ENCODE measurements at regions of chr17 and their contacts with region 1.

Region 1: GRCh38 chr17:3827124-3827773 is 18.8 kb downstream of the NCBP3 start:
- DNase-seq: peak; percentile 54 to 78 (median 63)
- H3K4me3 ChIP-seq: no peak overlapping the region
- H3K4me3 Mint-ChIP-seq: no peak overlapping the region
- H3K27ac ChIP-seq: no peak overlapping the region
- H3K27ac Mint-ChIP-seq: peak overlapping the region in 1 of 7 donors; percentile 54
- H3K4me1 ChIP-seq: no peaks in the 10 kb centered on the region
- H3K4me1 Mint-ChIP-seq: no peaks in the 10 kb centered on the region
- H3K27me3 ChIP-seq: no peaks in the 10 kb centered on the region
- H3K27me3 Mint-ChIP-seq: peaks cover 0 to 2% (median 0%) of the 10 kb centered on the region in 3 donors
- CTCF ChIP-seq: peak; percentile 90

Region 2: DNA sequence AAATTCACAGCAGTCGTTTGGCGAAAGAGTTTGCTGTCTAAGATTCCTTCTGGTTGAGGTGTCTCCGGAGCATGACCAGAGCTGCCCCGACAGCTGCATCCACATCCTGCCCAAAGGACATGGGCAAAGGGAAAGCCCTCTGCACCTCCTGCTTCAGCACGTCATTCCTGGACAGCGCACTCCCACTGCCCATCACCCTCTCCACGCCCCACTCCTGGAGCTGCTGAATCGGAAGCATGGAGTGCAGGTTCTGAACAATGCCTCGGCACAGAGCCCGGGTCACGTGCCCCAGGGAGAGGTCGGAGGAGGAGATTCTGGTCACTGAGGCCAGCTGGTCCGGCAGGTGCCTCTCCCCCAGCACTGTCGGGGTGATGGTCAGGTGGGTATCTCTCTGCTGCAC is 216.7 kb before region 1 on chr17:
- intact Hi-C with region 1: no loop called
- DNase-seq: no peak
- H3K4me3 ChIP-seq: no peak overlapping the region
- H3K4me3 Mint-ChIP-seq: no peak overlapping the region
- H3K27ac ChIP-seq: no peak overlapping the region
- H3K27ac Mint-ChIP-seq: no peak overlapping the region
- H3K4me1 ChIP-seq: no peaks in the 10 kb centered on the region
- H3K4me1 Mint-ChIP-seq: no peaks in the 10 kb centered on the region
- H3K27me3 ChIP-seq: no peaks in the 10 kb centered on the region
- H3K27me3 Mint-ChIP-seq: peaks cover 0 to 1% (median 0%) of the 10 kb centered on the region in 3 donors
- CTCF ChIP-seq: no peak

Region 3: GRCh38 chr17:3659541-3660111 is 167.6 kb before region 1 on chr17:
- intact Hi-C with region 1: no loop called
- DNase-seq: no peak
- H3K4me3 ChIP-seq: no peak overlapping the region
- H3K4me3 Mint-ChIP-seq: no peak overlapping the region
- H3K27ac ChIP-seq: no peak overlapping the region
- H3K27ac Mint-ChIP-seq: peak overlapping the region in 1 of 7 donors; percentile 63
- H3K4me1 ChIP-seq: no peaks in the 10 kb centered on the region
- H3K4me1 Mint-ChIP-seq: peaks cover 3% of the 10 kb centered on the region
- H3K27me3 ChIP-seq: no peaks in the 10 kb centered on the region
- H3K27me3 Mint-ChIP-seq: peaks cover 0 to 2% (median 0%) of the 10 kb centered on the region in 3 donors
- CTCF ChIP-seq: no peak

Region 4: DNA sequence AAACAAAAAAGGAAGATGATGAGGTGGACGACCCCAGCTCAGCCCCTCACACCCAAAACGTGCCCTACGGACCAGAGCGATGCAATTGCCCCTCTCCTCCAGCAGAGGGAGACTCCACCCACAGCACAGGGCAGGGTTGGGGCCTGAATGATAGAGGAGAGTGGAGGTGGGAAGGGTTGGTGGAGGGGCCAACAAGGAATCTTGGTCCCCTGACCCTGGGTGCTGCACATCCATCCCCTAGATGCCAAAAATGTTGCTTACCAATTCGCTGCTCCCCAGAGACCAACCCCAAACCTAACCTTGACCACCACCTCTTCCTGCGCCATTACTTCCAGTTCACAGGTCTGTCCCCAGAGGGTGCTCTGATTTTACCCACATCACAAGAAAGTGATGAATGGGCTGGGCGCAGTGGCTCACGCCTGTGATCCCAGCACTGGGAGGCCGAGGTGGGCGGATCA is 144.2 kb before region 1 on chr17:
- intact Hi-C with region 1: loop called (anchors 2 to 5 kb)
- DNase-seq: peak; percentile 29 to 54 (median 48)
- H3K4me3 ChIP-seq: no peak overlapping the region
- H3K4me3 Mint-ChIP-seq: no peak overlapping the region
- H3K27ac ChIP-seq: no peak overlapping the region
- H3K27ac Mint-ChIP-seq: peak overlapping the region in 1 of 7 donors; percentile 74
- H3K4me1 ChIP-seq: peaks cover 18 to 32% of the 10 kb centered on the region in 2 donors
- H3K4me1 Mint-ChIP-seq: peaks cover 28% of the 10 kb centered on the region
- H3K27me3 ChIP-seq: no peaks in the 10 kb centered on the region
- H3K27me3 Mint-ChIP-seq: peaks cover 6 to 15% (median 9%) of the 10 kb centered on the region in 3 donors
- CTCF ChIP-seq: peak; percentile 98

Region 5: GRCh38 chr17:3738562-3739295 is 88.5 kb before region 1 on chr17:
- intact Hi-C with region 1: loop called (anchors 1 kb)
- DNase-seq: no peak
- H3K4me3 ChIP-seq: no peak overlapping the region
- H3K4me3 Mint-ChIP-seq: no peak overlapping the region
- H3K27ac ChIP-seq: no peak overlapping the region
- H3K27ac Mint-ChIP-seq: peak overlapping the region in 2 of 7 donors; percentile 16
- H3K4me1 ChIP-seq: peaks cover 18 to 22% of the 10 kb centered on the region in 2 donors
- H3K4me1 Mint-ChIP-seq: peaks cover 23% of the 10 kb centered on the region
- H3K27me3 ChIP-seq: no peaks in the 10 kb centered on the region
- H3K27me3 Mint-ChIP-seq: peaks cover 0 to 6% (median 3%) of the 10 kb centered on the region in 3 donors
- CTCF ChIP-seq: no peak

Region 6: GRCh38 chr17:3762922-3763776 is 64.1 kb before region 1 on chr17:
- intact Hi-C with region 1: loop called in 1 of 2 experiments (anchors 10 kb)
- DNase-seq: peak in 2 of 3 donors; percentile 40 to 41
- H3K4me3 ChIP-seq: no peak overlapping the region
- H3K4me3 Mint-ChIP-seq: no peak overlapping the region
- H3K27ac ChIP-seq: no peak overlapping the region
- H3K27ac Mint-ChIP-seq: peak overlapping the region in 3 of 7 donors; percentile 19 to 75 (median 60)
- H3K4me1 ChIP-seq: peaks cover 8 to 23% of the 10 kb centered on the region in 2 donors
- H3K4me1 Mint-ChIP-seq: peaks cover 25% of the 10 kb centered on the region
- H3K27me3 ChIP-seq: no peaks in the 10 kb centered on the region
- H3K27me3 Mint-ChIP-seq: peaks cover 0 to 2% (median 2%) of the 10 kb centered on the region in 3 donors
- CTCF ChIP-seq: no peak

Region 7: GRCh38 chr17:3777366-3778120 is 49.7 kb before region 1 on chr17:
- intact Hi-C with region 1: no loop called
- DNase-seq: no peak
- H3K4me3 ChIP-seq: no peak overlapping the region
- H3K4me3 Mint-ChIP-seq: no peak overlapping the region
- H3K27ac ChIP-seq: no peak overlapping the region
- H3K27ac Mint-ChIP-seq: no peak overlapping the region
- H3K4me1 ChIP-seq: no peaks in the 10 kb centered on the region
- H3K4me1 Mint-ChIP-seq: no peaks in the 10 kb centered on the region
- H3K27me3 ChIP-seq: no peaks in the 10 kb centered on the region
- H3K27me3 Mint-ChIP-seq: peaks cover 0 to 3% (median 0%) of the 10 kb centered on the region in 3 donors
- CTCF ChIP-seq: no peak

Region 8: DNA sequence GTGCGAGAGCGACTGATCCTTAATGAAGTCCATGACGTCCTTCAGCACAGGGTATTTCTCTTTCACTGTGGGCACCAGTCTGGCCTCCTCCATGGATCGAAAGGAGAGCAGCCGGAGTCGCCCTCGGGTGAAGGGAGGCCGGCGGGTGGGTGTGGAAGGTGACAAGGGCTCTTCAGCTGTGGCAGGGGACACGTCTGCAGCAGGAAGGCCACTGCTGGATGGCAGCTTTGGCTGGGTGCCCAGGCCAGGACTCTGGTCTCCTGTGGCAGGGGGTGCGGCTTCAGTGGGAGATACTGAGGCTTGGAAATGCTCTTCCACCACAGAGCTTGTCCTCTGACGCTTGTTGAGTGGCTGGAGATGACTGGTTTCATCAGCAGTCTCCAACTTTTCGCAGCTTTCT is 237.1 kb after region 1 on chr17:
- intact Hi-C with region 1: no loop called
- DNase-seq: no peak
- H3K4me3 ChIP-seq: no peak overlapping the region
- H3K4me3 Mint-ChIP-seq: no peak overlapping the region
- H3K27ac ChIP-seq: no peak overlapping the region
- H3K27ac Mint-ChIP-seq: no peak overlapping the region
- H3K4me1 ChIP-seq: no peaks in the 10 kb centered on the region
- H3K4me1 Mint-ChIP-seq: no peaks in the 10 kb centered on the region
- H3K27me3 ChIP-seq: no peaks in the 10 kb centered on the region
- H3K27me3 Mint-ChIP-seq: peaks cover 0 to 1% (median 0%) of the 10 kb centered on the region in 3 donors
- CTCF ChIP-seq: no peak

Measured in CD14-positive monocyte (primary cell).